ENCODE measurements at regions of chr12 and their contacts with region 1.

Region 1: DNA sequence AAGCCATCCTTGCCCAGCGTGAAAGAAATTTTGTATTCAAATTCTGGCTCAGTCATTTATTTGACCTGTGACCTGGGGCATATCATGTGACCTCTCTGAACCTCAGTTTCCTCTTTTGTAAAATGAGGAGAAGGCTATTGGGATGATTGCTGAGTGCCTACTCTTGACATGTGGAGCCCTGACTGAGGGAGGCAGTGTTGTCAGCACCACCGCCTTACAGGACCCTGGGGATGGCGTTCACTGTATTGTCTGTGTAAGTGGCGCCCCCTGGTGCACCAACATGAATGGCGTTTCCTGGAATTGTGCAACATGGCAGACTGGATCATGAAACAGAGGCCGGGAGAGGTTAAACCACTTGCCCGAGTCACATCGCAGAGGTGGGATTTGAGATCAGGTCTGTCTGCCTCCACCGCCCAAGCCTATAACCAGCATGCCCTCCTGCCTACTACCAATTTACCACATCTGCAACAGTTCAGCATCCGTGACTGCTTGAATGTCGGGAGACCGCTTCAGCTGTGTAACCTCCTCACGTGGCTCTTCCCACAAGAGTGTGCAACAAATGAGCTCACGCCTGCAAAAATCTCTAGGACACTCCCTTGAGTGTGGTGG is 20.1 kb upstream of the CCDC63 start:
- DNase-seq: peak; percentile 92
- H3K4me3 ChIP-seq: no peak overlapping the region
- H3K27ac ChIP-seq: no peak overlapping the region
- H3K4me1 ChIP-seq: no peaks in the 10 kb centered on the region
- H3K27me3 ChIP-seq: no peaks in the 10 kb centered on the region
- CTCF ChIP-seq: peak; percentile 81

Region 2: DNA sequence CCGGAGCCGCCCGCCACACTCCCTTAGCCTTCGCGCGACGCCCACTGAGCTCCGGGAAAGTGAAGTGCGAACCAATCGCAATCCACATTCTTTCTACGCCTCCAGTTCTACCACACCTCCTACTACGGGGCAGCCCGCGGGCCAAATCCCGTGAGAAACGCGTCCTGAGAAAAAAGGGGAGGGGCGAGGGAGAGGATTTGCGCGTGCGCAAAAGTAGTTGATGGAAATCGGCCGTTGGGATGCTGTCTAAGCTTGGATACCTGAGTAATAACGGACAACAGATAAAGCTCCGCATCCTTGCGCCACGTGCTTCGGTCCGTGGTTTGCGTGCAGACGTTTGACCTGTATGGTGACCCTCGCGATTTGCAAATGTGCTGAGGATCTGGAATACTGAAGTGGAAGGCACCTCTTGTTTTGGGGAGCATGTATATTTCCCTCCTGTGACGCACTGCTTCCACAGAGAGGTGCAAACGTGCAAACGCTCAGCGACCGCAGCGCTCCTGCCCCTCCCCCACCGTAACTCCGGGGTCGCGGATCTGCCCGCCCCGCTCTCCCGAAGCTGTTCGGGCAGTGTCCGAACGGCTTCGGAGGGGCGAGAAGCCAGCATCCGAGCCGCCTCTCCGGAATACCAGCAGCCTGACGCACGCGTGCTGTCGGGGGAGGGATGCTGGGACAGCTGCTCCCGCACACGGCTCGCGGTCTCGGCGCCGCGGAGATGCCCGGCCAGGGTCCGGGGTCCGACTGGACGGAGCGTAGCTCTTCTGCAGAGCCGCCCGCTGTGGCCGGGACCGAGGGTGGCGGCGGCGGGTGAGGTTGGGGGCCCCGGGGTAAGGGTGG is 358.3 kb before region 1 on chr12 and contains the starts of genes FAM216A and GPN3:
- intact Hi-C with region 1: loop called (anchors 10 kb)
- DNase-seq: peak; percentile 99
- H3K4me3 ChIP-seq: peak within 1 kb of the TSS; percentile 68
- H3K27ac ChIP-seq: peak within 1 kb of the TSS; percentile 84
- H3K4me1 ChIP-seq: peaks cover 7% of the 10 kb centered on the region
- H3K27me3 ChIP-seq: no peaks in the 10 kb centered on the region
- CTCF ChIP-seq: no peak
- total RNA-seq, gene FAM216A: 1.6 TPM
- total RNA-seq, gene GPN3: 10.9 to 21.8 TPM

Region 3: DNA sequence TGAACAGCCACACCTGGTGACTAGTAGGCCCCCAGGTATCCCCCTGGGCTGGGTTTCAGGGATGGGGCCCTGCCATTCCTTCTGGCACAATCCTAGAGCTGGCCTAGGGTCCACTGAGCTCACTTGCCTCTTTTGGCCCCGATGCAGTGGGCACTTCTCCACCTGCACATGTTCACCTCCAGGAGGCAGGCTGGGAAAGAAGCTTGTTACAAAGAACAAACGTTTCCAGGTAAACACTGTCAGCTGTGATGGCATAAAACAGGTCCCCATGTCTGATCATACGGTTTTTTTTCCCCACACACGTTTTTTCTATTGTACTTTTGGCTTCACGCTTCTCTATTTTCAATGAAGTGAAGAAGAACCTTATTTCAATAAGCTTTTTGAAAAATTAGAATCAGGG is 121.9 kb before region 1 on chr12:
- intact Hi-C with region 1: loop called (anchors 5 kb)
- DNase-seq: no peak
- H3K4me3 ChIP-seq: no peak overlapping the region
- H3K27ac ChIP-seq: no peak overlapping the region
- H3K4me1 ChIP-seq: no peaks in the 10 kb centered on the region
- H3K27me3 ChIP-seq: no peaks in the 10 kb centered on the region
- CTCF ChIP-seq: peak; percentile 48

Measured in colonic mucosa (tissue), 4 donors.